ENCODE measurements at regions of chr10 and their contacts with region 1.

Region 1: DNA sequence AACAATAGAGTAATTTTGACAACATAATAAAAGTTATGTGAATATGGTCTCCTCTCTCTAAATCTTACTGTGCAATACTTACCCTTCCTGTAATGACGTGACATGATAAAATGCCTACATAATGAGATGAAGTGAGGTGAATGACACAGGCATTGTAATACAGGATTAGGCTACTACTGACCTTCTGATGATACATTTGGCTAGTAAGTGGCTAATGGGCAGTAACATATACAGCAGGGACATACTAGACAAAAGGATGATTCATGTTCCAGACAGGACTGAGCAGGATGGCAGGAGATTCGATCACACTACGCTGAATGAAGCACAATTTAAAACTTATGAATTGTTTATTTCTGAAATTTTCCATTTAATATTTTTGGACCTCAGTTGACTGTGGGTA is 4.7 kb downstream of the C10orf88 start:
- DNase-seq: no peak
- ATAC-seq: no peak
- H3K4me3 ChIP-seq: no peak overlapping the region
- H3K4me3 Mint-ChIP-seq: no peak overlapping the region
- H3K27ac ChIP-seq: no peak overlapping the region
- H3K27ac Mint-ChIP-seq: no peak overlapping the region
- H3K4me1 ChIP-seq: peaks cover 3 to 12% of the 10 kb centered on the region in 2 experiments
- H3K4me1 Mint-ChIP-seq: peaks cover 30 to 32% (median 31%) of the 10 kb centered on the region in 3 donors
- H3K27me3 ChIP-seq: no peaks in the 10 kb centered on the region
- H3K27me3 Mint-ChIP-seq: no peaks in the 10 kb centered on the region

Region 2: DNA sequence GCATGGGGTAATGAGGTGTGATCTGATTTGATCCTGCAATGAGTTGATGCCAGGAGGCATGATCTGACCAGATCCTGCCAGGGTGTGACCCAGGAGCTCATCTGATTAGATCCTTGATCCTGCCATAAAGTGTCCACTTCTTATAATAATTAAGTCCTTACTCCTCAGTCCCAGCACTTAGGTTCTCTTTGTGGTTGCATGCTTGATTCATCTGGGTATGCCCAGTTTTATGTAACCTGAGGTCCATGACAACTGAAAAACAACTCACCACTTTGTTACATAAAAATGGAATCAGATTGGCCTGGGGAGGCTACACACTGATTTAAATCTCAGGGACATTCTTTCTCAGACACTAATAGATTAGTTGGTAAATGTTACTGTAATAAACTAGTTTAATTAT is 78.6 kb after region 1 on chr10:
- CTCF ChIA-PET with region 1: no interaction called
- POLR2A ChIA-PET with region 1: no interaction called
- DNase-seq: no peak
- ATAC-seq: no peak
- H3K4me3 ChIP-seq: no peak overlapping the region
- H3K4me3 Mint-ChIP-seq: no peak overlapping the region
- H3K27ac ChIP-seq: no peak overlapping the region
- H3K27ac Mint-ChIP-seq: no peak overlapping the region
- H3K4me1 ChIP-seq: no peaks in the 10 kb centered on the region
- H3K4me1 Mint-ChIP-seq: peaks cover 0 to 4% (median 0%) of the 10 kb centered on the region in 3 donors
- H3K27me3 ChIP-seq: no peaks in the 10 kb centered on the region
- H3K27me3 Mint-ChIP-seq: no peaks in the 10 kb centered on the region

Region 3: DNA sequence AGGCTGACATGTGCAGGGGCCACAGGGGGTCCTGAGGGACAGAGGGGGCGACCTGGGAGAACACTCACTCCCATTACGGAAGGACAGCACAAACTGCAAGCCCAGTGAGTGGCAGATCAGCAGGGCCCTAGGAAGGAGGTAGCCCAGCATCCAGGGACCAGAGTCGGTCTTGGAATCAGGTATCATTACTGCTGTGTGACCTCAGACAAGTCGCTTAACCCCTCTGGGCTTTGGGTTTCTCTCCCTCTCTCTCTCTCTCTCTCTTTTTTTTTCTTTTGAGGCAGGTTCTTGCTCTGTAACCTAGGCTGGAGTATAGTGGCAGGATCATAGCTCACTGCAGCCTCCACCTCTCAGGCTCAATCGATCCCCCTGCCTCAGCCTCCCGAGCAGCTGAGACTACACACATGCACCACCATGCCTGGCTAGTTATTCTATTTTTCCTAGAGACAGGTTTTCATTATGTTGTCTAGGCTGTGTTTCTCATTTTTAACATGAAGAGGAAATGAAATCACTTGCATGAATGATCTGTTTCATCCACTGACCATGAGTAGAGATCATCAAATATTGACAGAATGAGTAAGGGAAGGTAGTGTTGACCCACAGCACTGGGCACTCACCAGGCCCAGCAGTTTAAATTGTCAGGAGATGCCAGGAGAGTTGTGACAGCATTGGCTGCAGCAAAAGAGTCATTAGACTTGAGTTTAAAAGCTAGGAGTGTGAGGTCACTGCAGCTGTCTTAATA is 254.3 kb after region 1 on chr10:
- CTCF ChIA-PET with region 1: no interaction called
- POLR2A ChIA-PET with region 1: no interaction called
- DNase-seq: no peak
- ATAC-seq: no peak
- H3K4me3 ChIP-seq: no peak overlapping the region
- H3K4me3 Mint-ChIP-seq: no peak overlapping the region
- H3K27ac ChIP-seq: no peak overlapping the region
- H3K27ac Mint-ChIP-seq: no peak overlapping the region
- H3K4me1 ChIP-seq: peaks cover 0 to 6% of the 10 kb centered on the region in 2 experiments
- H3K4me1 Mint-ChIP-seq: peaks cover 20 to 25% (median 25%) of the 10 kb centered on the region in 3 donors
- H3K27me3 ChIP-seq: no peaks in the 10 kb centered on the region
- H3K27me3 Mint-ChIP-seq: no peaks in the 10 kb centered on the region

Region 4: DNA sequence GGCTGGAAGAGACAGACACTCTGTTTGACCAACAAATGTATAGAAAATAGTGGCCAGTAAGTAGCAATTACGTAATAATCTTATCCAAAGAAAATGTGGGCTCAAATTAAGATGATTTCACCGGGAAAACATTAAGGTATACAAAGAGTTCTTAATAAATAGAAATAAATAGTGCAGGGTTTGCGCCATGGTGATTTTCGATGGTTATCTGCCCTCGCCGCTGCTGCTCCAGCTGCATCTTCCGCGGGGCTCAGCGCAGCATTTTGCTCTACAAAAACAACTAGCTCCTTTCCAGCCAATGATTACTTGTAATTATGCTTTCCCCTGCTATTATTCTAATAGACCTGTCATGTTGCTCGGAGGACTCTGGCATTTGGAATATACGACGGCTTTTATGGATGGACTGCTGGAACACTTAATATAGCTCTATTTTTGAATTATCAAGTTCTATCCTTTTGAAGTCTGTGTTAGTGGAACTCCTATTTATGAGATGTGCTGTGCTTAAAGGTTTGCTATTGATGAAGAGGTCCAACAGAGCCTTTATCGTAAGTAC is 308.7 kb after region 1 on chr10:
- CTCF ChIA-PET with region 1: no interaction called
- POLR2A ChIA-PET with region 1: no interaction called
- DNase-seq: no peak
- ATAC-seq: no peak
- H3K4me3 ChIP-seq: no peak overlapping the region
- H3K4me3 Mint-ChIP-seq: no peak overlapping the region
- H3K27ac ChIP-seq: no peak overlapping the region
- H3K27ac Mint-ChIP-seq: no peak overlapping the region
- H3K4me1 ChIP-seq: no peaks in the 10 kb centered on the region
- H3K4me1 Mint-ChIP-seq: no peaks in the 10 kb centered on the region
- H3K27me3 ChIP-seq: no peaks in the 10 kb centered on the region
- H3K27me3 Mint-ChIP-seq: peaks cover 0 to 2% of the 10 kb centered on the region in 2 donors

Region 5: GRCh38 chr10:124886195-124886594 is 1936.9 kb after region 1 on chr10:
- CTCF ChIA-PET with region 1: interaction called in 1 of 2 experiments, 11 read pairs
- POLR2A ChIA-PET with region 1: no interaction called
- DNase-seq: no peak
- ATAC-seq: no peak
- H3K4me3 ChIP-seq: no peak overlapping the region
- H3K4me3 Mint-ChIP-seq: no peak overlapping the region
- H3K27ac ChIP-seq: no peak overlapping the region
- H3K27ac Mint-ChIP-seq: no peak overlapping the region
- H3K4me1 ChIP-seq: no peaks in the 10 kb centered on the region
- H3K4me1 Mint-ChIP-seq: no peaks in the 10 kb centered on the region
- H3K27me3 ChIP-seq: peaks cover 0 to 3% of the 10 kb centered on the region in 2 experiments
- H3K27me3 Mint-ChIP-seq: no peaks in the 10 kb centered on the region